GM12878 (cell line): ENCODE measurements at regions of chr16 and their contacts with region 1.

Region 1: GRCh38 chr16:4957720-4958509 is at the start of gene SEC14L5:
- DNase-seq: peak; percentile 55
- ATAC-seq: peak; percentile 94
- H3K4me3 ChIP-seq: peak within 1 kb of the TSS; percentile 61; the same call in 1 of the 2 replicates
- H3K27ac ChIP-seq: no peak within 1 kb of the TSS
- H3K4me1 ChIP-seq: peaks cover 4% of the 10 kb centered on the region; the same call in 1 of the 2 replicates
- H3K27me3 ChIP-seq: no peaks in the 10 kb centered on the region; a peak in 2 of 4 replicates
- CTCF ChIP-seq: no peak
- EP300 ChIP-seq: no peak
- POLR2A ChIP-seq: no peak
- RAD21 ChIP-seq: no peak
- polyA plus RNA-seq, gene SEC14L5: not detected

Region 2: GRCh38 chr16:4307215-4308037 is 650.5 kb before region 1 on chr16:
- CTCF ChIA-PET with region 1: interaction called, 5 read pairs
- POLR2A ChIA-PET with region 1: no interaction called
- RAD21 ChIA-PET with region 1: no interaction called
- SMC1A ChIA-PET with region 1: no interaction called
- in situ Hi-C with region 1: no loop called
- intact Hi-C with region 1: loop called (anchors 5 kb)
- DNase-seq: peak; percentile 72
- ATAC-seq: peak; percentile 92
- H3K4me3 ChIP-seq: peak overlapping the region; percentile 94
- H3K27ac ChIP-seq: peak overlapping the region; percentile 87
- H3K4me1 ChIP-seq: peaks cover 13% of the 10 kb centered on the region
- H3K27me3 ChIP-seq: no peaks in the 10 kb centered on the region
- CTCF ChIP-seq: no peak
- EP300 ChIP-seq: no peak
- POLR2A ChIP-seq: peak; percentile 84
- RAD21 ChIP-seq: no peak

Region 3: DNA sequence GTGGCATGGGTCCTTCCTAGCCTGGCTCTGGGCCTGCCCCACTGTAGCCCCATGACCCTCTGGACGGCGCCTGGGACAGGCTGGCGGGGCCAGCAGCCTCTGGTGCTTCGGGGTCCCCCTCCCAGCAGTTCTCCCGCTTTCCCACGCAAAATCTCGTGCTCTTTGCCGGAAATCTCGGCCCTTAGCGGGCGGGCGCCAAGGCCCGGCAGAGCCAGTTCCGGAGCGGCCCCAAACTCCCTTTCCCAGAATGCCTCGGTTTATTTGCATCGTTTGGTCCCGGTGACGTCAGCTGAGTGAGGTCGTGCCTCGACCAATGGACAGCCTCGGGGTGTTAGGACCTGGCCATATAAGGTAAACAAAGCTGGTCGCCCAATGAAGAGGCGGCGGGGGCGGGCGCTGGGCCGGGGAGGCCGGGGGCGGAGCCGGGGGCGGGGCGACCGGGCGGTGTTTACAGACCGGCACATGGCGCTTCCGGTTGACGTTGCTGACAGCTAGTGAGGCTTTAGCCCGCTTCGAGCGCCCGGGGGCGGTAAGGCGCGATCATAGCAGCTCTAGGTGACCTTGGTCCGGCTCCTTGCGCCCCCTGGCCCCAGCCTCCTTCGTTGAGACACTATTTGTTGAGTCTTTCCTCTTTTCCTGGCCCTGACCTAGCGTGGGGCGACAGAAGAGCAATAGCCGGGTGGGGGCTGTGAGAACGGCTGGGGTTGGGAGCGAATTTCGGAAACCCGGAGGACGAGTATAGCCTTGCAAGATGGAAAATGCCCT is 341.7 kb before region 1 on chr16:
- CTCF ChIA-PET with region 1: no interaction called
- POLR2A ChIA-PET with region 1: no interaction called
- RAD21 ChIA-PET with region 1: no interaction called
- SMC1A ChIA-PET with region 1: no interaction called
- in situ Hi-C with region 1: loop called (anchors 10 kb)
- intact Hi-C with region 1: no loop called
- DNase-seq: peak; percentile 98
- ATAC-seq: peak; percentile 84
- H3K4me3 ChIP-seq: peak overlapping the region; percentile 82
- H3K27ac ChIP-seq: peak overlapping the region; percentile 99
- H3K4me1 ChIP-seq: peaks cover 20% of the 10 kb centered on the region
- H3K27me3 ChIP-seq: no peaks in the 10 kb centered on the region
- CTCF ChIP-seq: peak; percentile 44 to 68 (median 46)
- EP300 ChIP-seq: peak; percentile 22 to 55; a peak in 1 of 4 replicates
- POLR2A ChIP-seq: peak; percentile 91
- RAD21 ChIP-seq: peak; percentile 29; the same call in 1 of the 2 replicates

Region 4: DNA sequence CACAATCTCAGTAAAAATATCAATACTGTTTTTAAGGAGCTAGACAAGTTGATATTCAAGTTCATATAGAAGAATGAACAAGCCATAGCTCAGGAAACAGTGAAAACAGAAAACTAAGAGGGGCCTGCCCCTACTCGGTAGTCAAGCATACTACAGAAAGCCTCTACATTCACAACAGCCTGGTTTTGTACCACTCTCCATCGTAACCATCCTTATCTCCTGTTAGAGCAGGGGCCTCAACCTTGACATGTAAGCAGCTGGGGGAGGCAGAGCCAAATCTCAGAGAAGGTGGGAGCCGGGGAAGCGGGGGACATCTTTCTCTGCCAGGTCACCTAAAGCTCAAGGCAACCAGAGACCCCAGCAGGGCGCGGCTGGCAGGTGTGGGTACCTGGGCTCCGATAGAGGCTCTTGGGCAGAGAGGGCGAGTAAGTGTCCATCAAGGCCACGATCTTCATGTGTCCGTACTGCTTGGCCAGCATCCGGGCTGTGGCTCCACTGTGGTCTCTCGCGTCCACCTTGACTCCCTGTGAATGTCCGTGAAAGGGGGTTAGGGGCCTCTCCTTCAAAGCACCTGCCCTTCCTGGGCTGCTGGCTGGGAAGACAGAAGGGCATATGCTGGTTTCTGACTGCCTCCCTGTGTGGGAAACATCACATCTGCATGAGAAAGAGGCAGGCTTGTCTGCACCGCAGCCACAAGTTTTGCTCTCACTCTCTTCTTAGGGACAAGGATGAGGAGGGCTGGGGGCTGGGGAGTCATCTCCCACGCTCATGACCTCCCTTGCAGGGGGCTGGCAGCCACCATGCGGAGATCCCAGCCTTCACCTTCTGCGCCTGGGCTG is 244.0 kb before region 1 on chr16:
- CTCF ChIA-PET with region 1: no interaction called
- POLR2A ChIA-PET with region 1: no interaction called
- RAD21 ChIA-PET with region 1: no interaction called
- SMC1A ChIA-PET with region 1: no interaction called
- in situ Hi-C with region 1: no loop called
- intact Hi-C with region 1: loop called (anchors 1 kb)
- DNase-seq: no peak
- ATAC-seq: no peak
- H3K4me3 ChIP-seq: no peak overlapping the region
- H3K27ac ChIP-seq: no peak overlapping the region
- H3K4me1 ChIP-seq: peaks cover 6% of the 10 kb centered on the region; the same call in 1 of the 2 replicates
- H3K27me3 ChIP-seq: no peaks in the 10 kb centered on the region
- CTCF ChIP-seq: no peak
- EP300 ChIP-seq: no peak
- POLR2A ChIP-seq: no peak
- RAD21 ChIP-seq: no peak

Region 5: GRCh38 chr16:4846891-4847773 is 110.8 kb before region 1 on chr16 and contains the starts of genes GLYR1 and UBN1:
- CTCF ChIA-PET with region 1: interaction called, 4 read pairs
- POLR2A ChIA-PET with region 1: no interaction called
- RAD21 ChIA-PET with region 1: no interaction called
- SMC1A ChIA-PET with region 1: no interaction called
- in situ Hi-C with region 1: no loop called
- intact Hi-C with region 1: loop called (anchors 5 kb)
- DNase-seq: peak; percentile 83
- ATAC-seq: peak; percentile 91
- H3K4me3 ChIP-seq: peak within 1 kb of the TSS; percentile 91
- H3K27ac ChIP-seq: peak within 1 kb of the TSS; percentile 85
- H3K4me1 ChIP-seq: no peaks in the 10 kb centered on the region
- H3K27me3 ChIP-seq: no peaks in the 10 kb centered on the region
- CTCF ChIP-seq: no peak
- EP300 ChIP-seq: no peak
- POLR2A ChIP-seq: peak; percentile 96
- RAD21 ChIP-seq: no peak
- polyA plus RNA-seq, gene GLYR1: 7.3 to 10.1 TPM
- polyA plus RNA-seq, gene UBN1: 2.1 to 2.2 TPM

Region 6: GRCh38 chr16:4924593-4925378 is 33.1 kb before region 1 on chr16:
- CTCF ChIA-PET with region 1: no interaction called
- POLR2A ChIA-PET with region 1: no interaction called
- RAD21 ChIA-PET with region 1: no interaction called
- SMC1A ChIA-PET with region 1: no interaction called
- in situ Hi-C with region 1: no loop called
- intact Hi-C with region 1: no loop called
- DNase-seq: no peak
- ATAC-seq: no peak
- H3K4me3 ChIP-seq: no peak overlapping the region
- H3K27ac ChIP-seq: no peak overlapping the region
- H3K4me1 ChIP-seq: no peaks in the 10 kb centered on the region
- H3K27me3 ChIP-seq: no peaks in the 10 kb centered on the region; a peak in 1 of 4 replicates
- CTCF ChIP-seq: no peak
- EP300 ChIP-seq: no peak
- POLR2A ChIP-seq: no peak
- RAD21 ChIP-seq: no peak

Region 7: DNA sequence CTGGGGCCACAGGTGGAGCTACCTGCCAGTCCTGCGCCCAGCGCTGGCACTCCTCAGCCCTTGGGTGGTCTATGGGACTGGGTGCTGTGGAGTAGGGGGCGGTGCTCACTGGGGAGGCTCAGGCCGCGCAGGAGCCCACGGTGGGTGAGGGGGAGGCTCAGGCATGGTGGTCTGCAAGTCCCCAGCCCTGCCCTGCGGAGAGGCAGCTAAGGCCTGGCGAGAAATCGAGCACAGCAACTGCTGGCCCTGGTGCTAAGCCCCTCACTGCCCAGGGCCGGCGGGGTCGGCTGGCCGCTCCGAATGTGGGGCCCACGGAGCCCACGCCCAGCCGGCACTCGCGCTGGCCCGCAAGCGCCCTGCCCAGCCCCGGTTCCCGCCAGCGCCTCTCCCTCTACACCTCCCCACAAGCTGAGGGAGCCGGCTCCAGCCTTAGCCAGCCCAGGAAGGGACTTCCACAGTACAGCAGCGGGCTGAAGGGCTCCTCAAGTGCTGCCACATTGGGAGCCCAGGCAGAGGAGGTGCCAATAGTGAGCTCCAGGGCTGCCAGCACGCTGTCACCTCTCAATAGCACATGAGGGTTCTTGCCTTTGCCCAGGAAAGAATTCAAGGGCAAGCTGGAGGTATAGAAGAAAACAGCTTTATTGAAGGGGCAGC is 150.7 kb after region 1 on chr16:
- CTCF ChIA-PET with region 1: no interaction called
- POLR2A ChIA-PET with region 1: no interaction called
- RAD21 ChIA-PET with region 1: no interaction called
- SMC1A ChIA-PET with region 1: no interaction called
- in situ Hi-C with region 1: no loop called
- intact Hi-C with region 1: no loop called
- DNase-seq: no peak
- ATAC-seq: no peak
- H3K4me3 ChIP-seq: no peak overlapping the region
- H3K27ac ChIP-seq: no peak overlapping the region
- H3K4me1 ChIP-seq: no peaks in the 10 kb centered on the region
- H3K27me3 ChIP-seq: no peaks in the 10 kb centered on the region
- CTCF ChIP-seq: no peak
- EP300 ChIP-seq: no peak
- POLR2A ChIP-seq: no peak
- RAD21 ChIP-seq: no peak